Left cardiac atrium (tissue), 4 donors: ENCODE measurements at regions of chr17 and their contacts with region 1.

Region 1: DNA sequence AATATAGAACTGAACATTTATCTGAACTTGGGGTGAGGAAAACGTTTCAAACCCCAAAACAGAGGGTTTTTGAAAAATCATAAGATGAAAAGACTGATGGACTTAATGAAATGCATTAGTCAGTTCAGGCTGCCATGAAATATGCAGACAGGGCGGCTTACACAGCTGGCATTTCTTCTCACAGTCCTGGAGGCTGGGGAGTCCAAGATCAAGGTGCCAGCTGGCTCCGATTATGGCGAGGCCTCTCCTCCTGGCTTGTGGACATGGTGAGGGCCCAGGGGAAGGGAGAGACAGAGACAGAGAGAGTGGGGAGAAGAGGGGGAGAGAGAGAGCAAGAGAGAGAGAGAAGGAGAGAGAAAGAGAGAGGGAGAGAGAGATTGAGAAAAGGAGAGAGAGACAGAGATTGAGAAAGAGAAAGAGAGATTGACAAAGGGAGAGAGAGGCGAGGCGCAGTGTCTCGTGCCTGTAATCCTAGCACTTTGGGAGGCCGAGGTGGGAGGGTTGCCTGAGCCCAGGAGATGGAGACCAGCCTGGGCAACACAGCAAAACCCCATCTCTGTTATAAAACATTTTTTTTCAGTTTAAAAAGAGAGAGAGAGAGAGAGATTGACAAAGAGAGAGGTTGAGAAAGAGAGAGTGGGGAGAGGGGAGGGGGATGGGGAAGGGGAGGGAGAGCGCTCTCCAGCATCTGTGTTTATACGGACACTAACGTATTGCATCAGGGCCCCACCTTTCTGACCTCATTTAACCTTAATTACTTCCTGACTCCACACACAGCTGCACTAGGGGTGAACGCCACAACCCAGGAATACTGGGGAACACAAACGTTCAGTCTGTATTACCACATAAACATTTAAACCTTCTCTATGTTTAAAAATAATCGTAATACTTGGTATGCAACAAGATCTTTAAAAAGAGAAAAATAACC is 24.6 kb upstream of the RPH3AL start:
- DNase-seq: peak; percentile 58
- ATAC-seq: peak; percentile 79 to 91

Region 2: DNA sequence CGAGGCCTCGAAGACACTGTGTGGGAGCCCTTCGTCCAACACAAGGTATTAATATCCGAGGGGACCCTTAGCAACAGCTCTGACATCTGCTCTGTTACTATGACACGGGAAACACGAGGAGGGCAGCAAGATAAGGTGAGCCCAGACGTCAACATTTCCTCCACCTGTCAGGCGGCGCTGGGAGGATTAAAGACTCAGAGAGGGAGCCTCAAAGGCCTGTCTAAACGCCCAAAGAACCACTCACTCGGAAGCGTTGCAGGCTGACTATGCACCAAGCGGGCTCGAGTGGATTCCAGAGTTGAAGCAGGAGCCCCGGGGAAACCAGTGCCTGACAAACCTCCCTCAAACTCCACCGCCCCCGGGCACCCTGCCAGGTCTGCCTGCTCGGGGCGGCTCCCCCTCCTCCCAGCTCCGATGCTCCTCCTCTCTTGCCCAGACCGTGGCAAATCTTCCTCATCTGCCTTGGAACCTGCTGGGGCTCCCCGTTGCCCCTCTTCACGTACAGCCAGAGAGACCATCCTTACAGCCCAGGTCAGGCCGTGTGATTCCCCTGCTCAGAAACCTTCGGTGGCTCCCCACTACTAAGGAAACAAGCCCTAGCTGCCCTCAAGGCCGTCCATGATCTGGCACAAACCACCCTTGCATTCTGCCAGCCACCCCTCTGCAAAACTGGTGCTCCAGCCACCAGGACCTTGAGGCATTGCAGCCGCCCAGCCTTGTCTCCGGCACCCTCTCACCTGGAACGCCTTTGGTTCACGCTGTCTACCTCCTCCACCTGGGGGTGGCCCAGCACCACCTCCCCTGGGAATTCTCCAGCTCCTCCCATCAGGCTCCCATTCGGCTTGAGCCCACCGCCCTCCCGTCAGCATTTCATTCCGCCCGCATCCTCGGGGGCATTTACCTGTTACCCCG is 40.8 kb before region 1 on chr17:
- intact Hi-C with region 1: loop called in 1 of 2 experiments (anchors 5 kb)
- DNase-seq: peak; percentile 83
- ATAC-seq: no peak